KBM-7 (cell line): ENCODE measurements at regions of chr9 and their contacts with region 1.

Region 1: DNA sequence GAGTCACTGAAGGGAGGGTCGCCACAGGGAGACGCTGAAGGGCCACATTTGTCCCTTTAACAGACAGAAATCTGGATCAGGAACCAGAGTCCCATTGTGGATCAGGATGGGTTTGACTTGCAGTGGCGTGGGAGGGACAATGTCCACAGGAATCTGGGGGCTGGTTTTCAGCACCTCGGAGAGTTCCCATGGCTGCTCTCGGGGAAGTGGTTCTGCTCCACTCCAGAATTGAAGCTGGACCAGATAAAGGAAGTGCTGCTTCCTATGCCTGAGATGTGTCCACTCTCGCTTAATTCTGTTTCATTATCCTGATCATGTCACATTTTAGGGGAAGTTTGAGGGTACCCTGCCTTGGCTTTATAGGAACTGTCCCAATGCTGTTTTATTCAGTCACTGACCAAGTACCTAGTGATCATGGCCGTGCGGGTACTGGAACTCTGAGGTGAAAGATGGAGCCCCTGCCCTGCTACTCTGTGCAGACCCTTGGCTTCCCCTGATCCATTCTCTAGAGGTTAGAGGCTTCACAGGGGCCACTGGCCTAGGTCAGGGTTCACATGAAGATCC is 28.7 kb downstream of the ENHO start:
- DNase-seq: peak; percentile 54

Region 2: DNA sequence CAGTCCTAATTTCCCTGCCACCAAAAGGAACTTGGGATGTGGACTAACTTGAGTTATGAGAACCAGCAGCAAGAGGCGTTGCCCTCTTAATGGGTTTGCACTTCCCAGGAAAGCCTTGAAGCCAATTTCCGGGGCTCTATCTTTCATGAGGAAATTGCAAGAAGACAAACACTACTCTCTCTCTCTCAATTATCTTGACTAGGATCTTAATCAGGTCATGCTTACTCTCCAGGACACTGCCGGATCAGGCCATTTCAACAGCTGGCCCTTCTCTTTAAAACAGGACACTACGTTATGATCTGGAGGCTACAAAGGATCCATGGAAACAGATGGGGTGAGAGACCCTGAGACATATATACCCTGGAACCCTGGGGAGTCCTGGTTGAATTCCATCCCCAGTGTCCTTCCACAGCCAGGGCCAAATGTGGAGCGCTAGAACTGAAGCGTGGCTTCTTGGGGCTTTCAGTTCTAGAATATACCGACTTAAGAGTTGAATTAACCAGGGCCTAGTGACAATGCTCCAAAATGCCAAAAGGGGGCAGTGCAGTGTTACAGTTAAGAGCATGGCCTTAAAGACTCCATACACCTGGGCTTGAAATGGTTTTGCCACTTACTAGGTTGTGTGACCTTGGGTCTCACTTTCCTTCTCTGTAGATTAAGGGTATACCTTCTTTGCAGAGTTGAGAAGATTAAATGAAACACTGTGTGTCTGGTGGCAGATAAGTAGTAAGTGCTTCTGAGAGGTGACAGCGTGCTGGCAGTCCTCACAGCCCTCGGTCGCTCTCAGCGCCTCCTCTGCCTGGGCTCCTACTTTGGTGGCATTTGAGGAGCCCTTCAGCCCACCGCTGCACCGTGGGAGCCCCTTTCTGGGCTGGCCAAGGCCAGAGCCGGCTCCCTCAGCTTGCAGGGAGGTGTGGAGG is 56.8 kb before region 1 on chr9:
- in situ Hi-C with region 1: loop called (anchors 10 kb)
- DNase-seq: peak; percentile 75